Activated CD8-positive, alpha-beta T cell treated with anti-CD3 and anti-CD28 coated beads, Interleukin-2, amount 10 ng/mL, durations not matched to agents 7 days and 5 days (primary cell): ENCODE measurements at regions of chr15 and their contacts with region 1.

Region 1: DNA sequence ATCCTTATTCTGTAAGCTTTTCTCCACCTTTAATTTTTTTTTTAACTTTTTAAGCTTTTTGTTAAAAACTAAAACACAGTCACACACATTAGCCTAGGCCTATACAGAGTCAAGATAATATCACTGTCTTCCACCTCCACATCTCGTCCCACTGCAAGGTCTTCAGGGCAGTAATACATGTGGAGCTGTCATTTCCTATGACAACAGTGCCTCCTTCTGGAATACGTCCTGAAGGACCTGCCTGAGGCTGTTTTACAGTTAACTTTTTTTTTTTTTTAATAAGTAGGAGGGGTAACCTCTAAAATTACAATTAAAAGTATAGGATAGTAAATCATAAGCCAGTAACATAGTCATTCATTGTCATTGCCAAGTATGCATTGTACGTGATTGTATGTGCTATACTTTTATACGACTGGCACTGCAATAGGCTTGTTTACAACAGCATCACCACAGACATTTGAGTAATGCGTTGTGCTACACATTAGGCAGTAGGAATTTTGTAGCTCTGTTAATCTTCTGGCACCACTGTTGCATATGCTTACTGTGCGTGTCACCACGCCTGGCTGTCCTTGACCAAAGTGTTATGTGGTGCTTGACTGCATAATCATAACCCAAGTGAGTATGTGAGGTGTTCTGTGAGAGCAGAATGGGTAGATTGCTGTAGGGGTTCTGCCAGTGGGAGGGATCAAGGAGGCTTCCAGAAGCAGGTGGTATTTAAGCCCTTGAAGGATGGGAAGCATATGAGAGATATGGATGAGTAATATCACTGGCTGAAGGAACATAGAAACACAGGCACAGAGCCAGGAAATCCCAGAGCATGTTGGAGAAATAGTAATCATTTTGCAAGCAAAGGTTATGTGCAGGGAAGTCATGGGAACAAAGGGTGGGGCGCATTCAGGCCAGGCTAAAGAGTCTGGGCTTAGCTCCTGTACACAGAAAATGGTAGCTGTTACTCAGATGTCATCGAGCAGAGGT is 18.3 kb downstream of the FBXO22 start:
- DNase-seq: peak; percentile 36
- ATAC-seq: peak; percentile 27
- H3K4me3 Mint-ChIP-seq: no peak overlapping the region
- H3K27ac Mint-ChIP-seq: no peak overlapping the region
- H3K4me1 Mint-ChIP-seq: peaks cover 53% of the 10 kb centered on the region
- H3K27me3 Mint-ChIP-seq: no peaks in the 10 kb centered on the region

Region 2: GRCh38 chr15:75809986-75810750 is 111.8 kb before region 1 on chr15:
- CTCF ChIA-PET with region 1: interaction called, 18 read pairs
- POLR2A ChIA-PET with region 1: no interaction called
- DNase-seq: peak; percentile 25
- ATAC-seq: peak; percentile 53
- H3K4me3 Mint-ChIP-seq: no peak overlapping the region
- H3K27ac Mint-ChIP-seq: no peak overlapping the region
- H3K4me1 Mint-ChIP-seq: peaks cover 6% of the 10 kb centered on the region
- H3K27me3 Mint-ChIP-seq: peaks cover 17% of the 10 kb centered on the region

Region 3: GRCh38 chr15:75895731-75896130 is 26.3 kb before region 1 on chr15:
- CTCF ChIA-PET with region 1: no interaction called
- POLR2A ChIA-PET with region 1: no interaction called
- DNase-seq: no peak
- ATAC-seq: no peak
- H3K4me3 Mint-ChIP-seq: no peak overlapping the region
- H3K27ac Mint-ChIP-seq: no peak overlapping the region
- H3K4me1 Mint-ChIP-seq: peaks cover 13% of the 10 kb centered on the region
- H3K27me3 Mint-ChIP-seq: no peaks in the 10 kb centered on the region